ENCODE measurements at regions of chr3 and their contacts with region 1.

Region 1: GRCh38 chr3:101573449-101574387 is at the start of gene PCNP:
- DNase-seq: peak; percentile 100
- H3K4me3 Mint-ChIP-seq: peak within 1 kb of the TSS; percentile 91
- H3K27ac Mint-ChIP-seq: peak within 1 kb of the TSS; percentile 94
- H3K4me1 Mint-ChIP-seq: peaks cover 61% of the 10 kb centered on the region
- H3K27me3 Mint-ChIP-seq: no peaks in the 10 kb centered on the region
- total RNA-seq, gene PCNP: 231 to 236 TPM

Region 2: GRCh38 chr3:100400780-100401673 is 1172.7 kb before region 1 on chr3 and contains the starts of genes LNP1 and TOMM70:
- CTCF ChIA-PET with region 1: no interaction called
- POLR2A ChIA-PET with region 1: interaction called, 3 read pairs
- intact Hi-C with region 1: loop called (anchors 10 kb)
- DNase-seq: peak; percentile 97
- H3K4me3 Mint-ChIP-seq: peak within 1 kb of the TSS; percentile 92
- H3K27ac Mint-ChIP-seq: peak within 1 kb of the TSS; percentile 94
- H3K4me1 Mint-ChIP-seq: peaks cover 62% of the 10 kb centered on the region
- H3K27me3 Mint-ChIP-seq: no peaks in the 10 kb centered on the region
- total RNA-seq, gene LNP1: 1.9 to 2.3 TPM
- total RNA-seq, gene TOMM70: 44.9 to 47.1 TPM

Region 3: GRCh38 chr3:101381809-101382208 is 191.9 kb before region 1 on chr3:
- CTCF ChIA-PET with region 1: no interaction called
- POLR2A ChIA-PET with region 1: no interaction called
- intact Hi-C with region 1: loop called (anchors 2 kb)
- DNase-seq: no peak
- H3K4me3 Mint-ChIP-seq: no peak overlapping the region
- H3K27ac Mint-ChIP-seq: no peak overlapping the region
- H3K4me1 Mint-ChIP-seq: peaks cover 50% of the 10 kb centered on the region
- H3K27me3 Mint-ChIP-seq: no peaks in the 10 kb centered on the region

Region 4: DNA sequence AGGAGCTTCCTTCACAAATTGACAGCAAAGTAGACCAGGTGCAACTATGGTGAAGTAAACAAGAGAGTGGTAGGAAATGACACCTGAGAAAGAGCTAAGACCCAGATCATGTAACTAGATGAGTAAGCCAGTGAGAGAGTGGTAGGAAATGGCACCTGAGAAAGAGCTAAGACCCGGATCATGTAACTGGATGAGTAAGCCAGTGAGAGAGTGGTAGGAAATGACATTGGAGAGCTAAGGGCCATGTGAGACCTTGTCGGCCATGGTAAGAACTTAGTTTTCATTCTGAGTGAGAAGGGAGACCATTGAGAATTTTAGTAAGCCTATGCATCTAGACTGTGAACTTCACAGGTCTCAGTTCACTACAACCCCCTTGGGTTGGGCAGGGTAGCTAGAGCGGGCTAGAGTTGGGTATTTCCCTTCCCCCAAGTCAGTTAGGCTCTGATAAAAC is 55.3 kb before region 1 on chr3:
- CTCF ChIA-PET with region 1: interaction called, 9 read pairs
- POLR2A ChIA-PET with region 1: interaction called, 18 read pairs
- intact Hi-C with region 1: loop called (anchors 1 kb)
- DNase-seq: peak; percentile 69
- H3K4me3 Mint-ChIP-seq: peak overlapping the region; percentile 65
- H3K27ac Mint-ChIP-seq: peak overlapping the region; percentile 93
- H3K4me1 Mint-ChIP-seq: peaks cover 48% of the 10 kb centered on the region
- H3K27me3 Mint-ChIP-seq: no peaks in the 10 kb centered on the region

Region 5: GRCh38 chr3:101643861-101644613 is 70.3 kb after region 1 on chr3:
- CTCF ChIA-PET with region 1: interaction called, 5 read pairs
- POLR2A ChIA-PET with region 1: interaction called, 4 read pairs
- intact Hi-C with region 1: loop called (anchors 1 kb)
- DNase-seq: peak; percentile 69
- H3K4me3 Mint-ChIP-seq: no peak overlapping the region
- H3K27ac Mint-ChIP-seq: peak overlapping the region; percentile 87
- H3K4me1 Mint-ChIP-seq: peaks cover 32% of the 10 kb centered on the region
- H3K27me3 Mint-ChIP-seq: no peaks in the 10 kb centered on the region

Region 6: DNA sequence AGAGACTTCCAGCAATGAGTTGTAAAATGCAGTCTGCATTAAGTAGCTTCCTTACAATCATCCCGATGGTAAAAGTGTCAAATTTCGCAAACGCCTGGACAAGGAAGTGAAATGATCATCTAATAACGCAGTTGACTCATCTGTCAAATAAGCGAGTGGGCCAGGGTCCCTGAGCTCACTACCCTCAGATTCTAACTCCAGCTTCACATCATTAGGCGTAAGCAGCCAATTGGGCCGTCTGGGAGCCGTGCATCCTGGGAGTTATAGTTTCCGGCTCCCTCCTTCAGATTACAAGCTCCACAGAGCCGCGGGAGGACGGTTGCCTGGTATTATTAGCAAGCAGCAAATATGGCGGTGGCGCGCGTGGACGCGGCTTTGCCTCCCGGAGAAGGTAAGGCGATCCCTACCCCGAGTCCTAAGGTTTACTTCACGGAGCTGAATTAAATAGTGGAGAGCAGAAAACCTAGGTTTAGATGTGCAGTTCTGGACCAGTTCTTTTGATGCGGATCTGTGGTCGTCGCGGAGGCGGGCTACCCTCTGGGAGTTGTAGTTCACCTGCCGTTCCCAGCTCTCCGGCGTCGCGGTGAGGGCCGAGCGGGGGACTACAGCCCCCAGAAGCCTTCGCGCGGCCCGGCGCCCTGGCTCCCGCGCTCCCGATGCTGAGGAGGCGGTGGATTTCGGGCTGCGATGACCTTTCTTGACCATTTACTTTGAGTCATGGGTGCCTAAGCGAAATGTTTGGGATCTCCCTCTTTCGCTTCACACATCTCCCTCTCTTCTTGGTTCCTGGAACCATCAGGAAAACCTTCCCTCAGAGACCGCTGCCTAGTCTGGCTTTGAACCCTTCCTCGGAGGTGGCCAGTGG is 150.8 kb after region 1 on chr3 and contains the start of gene CEP97:
- CTCF ChIA-PET with region 1: no interaction called
- POLR2A ChIA-PET with region 1: no interaction called
- intact Hi-C with region 1: loop called (anchors 1 kb)
- DNase-seq: peak; percentile 92
- H3K4me3 Mint-ChIP-seq: peak within 1 kb of the TSS; percentile 99
- H3K27ac Mint-ChIP-seq: peak within 1 kb of the TSS; percentile 99
- H3K4me1 Mint-ChIP-seq: peaks cover 46% of the 10 kb centered on the region
- H3K27me3 Mint-ChIP-seq: no peaks in the 10 kb centered on the region
- total RNA-seq, gene CEP97: 16.6 to 17.9 TPM

Region 7: DNA sequence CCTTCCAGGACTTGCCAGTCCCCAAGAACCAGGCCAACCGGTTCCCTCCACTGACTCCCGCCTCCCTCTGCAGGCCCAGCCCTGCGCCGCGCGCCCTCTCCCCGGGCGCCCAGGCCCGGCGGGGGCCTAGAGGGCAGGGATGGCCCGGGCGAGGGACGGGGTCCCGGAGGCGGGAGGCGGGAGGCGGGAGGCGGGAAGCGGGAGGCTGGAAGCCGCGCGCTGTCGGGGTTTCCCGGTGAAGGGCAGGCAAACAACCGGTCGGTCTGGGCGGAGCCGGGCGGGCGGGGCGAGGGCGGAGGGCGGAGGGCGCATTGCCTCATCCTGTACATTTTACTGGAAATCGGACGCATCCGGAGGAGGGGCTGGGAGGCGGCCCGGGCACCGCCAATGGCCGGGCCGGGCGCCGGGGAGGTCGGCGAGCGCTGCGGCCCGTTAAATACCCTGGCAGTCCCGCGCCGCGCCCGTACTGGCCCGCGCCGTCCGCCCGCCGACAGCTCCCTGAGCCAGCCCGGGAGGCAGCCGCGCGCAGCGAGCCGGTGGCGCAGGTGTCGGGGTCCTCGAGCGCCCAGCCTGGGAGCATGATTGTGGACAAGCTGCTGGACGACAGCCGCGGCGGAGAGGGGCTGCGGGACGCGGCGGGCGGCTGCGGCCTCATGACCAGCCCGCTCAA is 275.5 kb after region 1 on chr3 and contains the start of gene NFKBIZ:
- CTCF ChIA-PET with region 1: no interaction called
- POLR2A ChIA-PET with region 1: no interaction called
- intact Hi-C with region 1: loop called (anchors 5 kb)
- DNase-seq: peak; percentile 97
- H3K4me3 Mint-ChIP-seq: peak within 1 kb of the TSS; percentile 92
- H3K27ac Mint-ChIP-seq: peak within 1 kb of the TSS; percentile 99
- H3K4me1 Mint-ChIP-seq: peaks cover 45% of the 10 kb centered on the region
- H3K27me3 Mint-ChIP-seq: no peaks in the 10 kb centered on the region
- total RNA-seq, gene NFKBIZ: 65.9 to 74.9 TPM

Region 8: DNA sequence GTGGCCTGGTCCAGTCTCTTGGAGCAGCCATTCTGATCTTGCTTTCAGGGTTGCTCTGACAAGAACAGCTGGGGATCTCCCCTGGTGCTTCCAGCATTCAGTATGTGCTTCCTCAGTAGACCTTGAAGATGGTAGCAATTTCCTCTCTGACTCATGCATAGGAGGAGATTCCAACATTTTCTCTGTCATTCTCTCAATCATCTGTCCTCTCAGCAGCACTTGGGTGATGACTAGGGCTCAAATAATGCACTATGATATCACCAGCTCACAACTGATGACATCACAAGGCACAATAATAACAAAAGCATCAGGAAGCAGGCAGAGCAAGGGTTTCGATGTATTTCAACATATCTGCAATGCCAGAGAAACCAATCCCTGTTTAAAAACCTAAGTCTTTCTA is 328.3 kb after region 1 on chr3:
- CTCF ChIA-PET with region 1: no interaction called
- POLR2A ChIA-PET with region 1: no interaction called
- intact Hi-C with region 1: no loop called
- DNase-seq: peak; percentile 28
- H3K4me3 Mint-ChIP-seq: no peak overlapping the region
- H3K27ac Mint-ChIP-seq: no peak overlapping the region
- H3K4me1 Mint-ChIP-seq: peaks cover 7% of the 10 kb centered on the region
- H3K27me3 Mint-ChIP-seq: no peaks in the 10 kb centered on the region

Measured in activated CD4-positive, alpha-beta memory T cell treated with anti-CD3 and anti-CD28 coated beads for 36 hours (primary cell).